Tibial artery (tissue), 4 donors: ENCODE measurements at regions of chr21 and their contacts with region 1.

Region 1: GRCh38 chr21:39137248-39138178 is 45.7 kb downstream of the PSMG1 start:
- DNase-seq: no peak
- H3K4me3 ChIP-seq: no peak overlapping the region
- H3K27ac ChIP-seq: no peak overlapping the region
- H3K4me1 ChIP-seq: peaks cover 0 to 4% (median 1%) of the 10 kb centered on the region in 4 donors
- H3K27me3 ChIP-seq: no peaks in the 10 kb centered on the region
- CTCF ChIP-seq: no peak

Region 2: DNA sequence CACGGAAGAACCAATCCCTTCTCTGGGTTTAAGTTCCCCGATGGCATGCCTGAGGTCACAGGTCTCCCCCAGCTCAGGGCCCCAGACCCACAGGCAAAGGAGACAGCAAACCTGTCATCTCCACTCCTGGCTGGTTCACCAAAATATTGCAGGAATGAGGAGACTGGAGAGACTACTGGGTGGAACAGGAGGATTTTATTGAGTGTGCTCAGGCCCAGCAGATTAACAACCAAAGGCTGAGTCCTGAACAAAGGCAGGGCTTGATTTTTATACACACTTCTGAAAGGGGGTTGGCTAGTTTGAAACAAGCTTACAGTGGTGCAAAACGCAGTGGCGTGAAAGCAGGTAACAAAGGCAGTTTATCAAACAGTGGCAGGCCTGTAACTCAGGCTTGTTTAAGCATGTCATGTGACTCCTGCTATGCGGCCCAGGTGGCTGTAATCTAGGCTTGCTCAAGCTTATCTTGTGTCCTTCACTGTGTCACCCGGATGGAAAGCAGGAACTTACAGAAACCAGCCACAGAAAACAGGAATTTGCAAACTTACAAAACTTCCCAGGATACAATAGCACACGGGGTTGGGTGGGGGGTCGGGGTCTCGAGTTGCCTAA is 908.1 kb before region 1 on chr21:
- intact Hi-C with region 1: loop called (anchors 5 kb)
- DNase-seq: no peak
- H3K4me3 ChIP-seq: no peak overlapping the region
- H3K27ac ChIP-seq: no peak overlapping the region
- H3K4me1 ChIP-seq: peaks cover 0 to 5% (median 2%) of the 10 kb centered on the region in 4 donors
- H3K27me3 ChIP-seq: no peaks in the 10 kb centered on the region
- CTCF ChIP-seq: no peak

Region 3: DNA sequence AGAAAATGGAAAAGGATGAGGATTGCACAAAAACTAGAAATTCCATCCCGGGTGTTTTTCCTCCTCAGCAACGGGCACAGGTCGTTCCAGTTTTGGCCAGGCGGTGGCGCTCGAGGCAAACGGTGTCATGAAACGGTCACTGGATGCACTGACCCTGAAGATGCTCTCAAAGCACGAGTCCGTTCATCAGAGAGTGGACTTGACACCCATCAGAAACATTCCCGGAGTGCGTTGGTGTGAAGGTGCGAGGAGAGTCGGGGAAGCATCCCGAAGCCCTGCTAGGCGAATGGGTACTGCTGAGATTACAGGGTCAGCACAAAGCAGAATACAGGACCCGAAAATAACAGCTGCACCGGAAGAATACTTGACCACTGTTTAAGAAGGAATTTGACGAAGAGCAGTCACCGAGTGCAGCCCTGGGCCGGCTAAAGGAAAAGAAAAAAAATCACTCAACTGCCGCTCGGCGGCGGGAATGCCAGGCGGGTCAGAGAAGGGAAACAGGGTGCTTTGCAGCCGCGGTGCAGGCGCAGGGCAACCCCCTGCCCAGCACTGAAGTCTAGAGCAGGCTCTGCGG is 403.5 kb before region 1 on chr21:
- intact Hi-C with region 1: loop called (anchors 5 kb)
- DNase-seq: peak; percentile 93 to 94
- H3K4me3 ChIP-seq: peak overlapping the region; percentile 31 to 48
- H3K27ac ChIP-seq: peak overlapping the region; percentile 56 to 58
- H3K4me1 ChIP-seq: peaks cover 0 to 20% (median 4%) of the 10 kb centered on the region in 4 donors
- H3K27me3 ChIP-seq: no peaks in the 10 kb centered on the region
- CTCF ChIP-seq: peak; percentile 90 to 97